Transverse colon (tissue), 4 donors: ENCODE measurements at regions of chr3 and their contacts with region 1.

Region 1: GRCh38 chr3:53881691-53882593 is at the start of gene ACTR8:
- DNase-seq: peak; percentile 88
- H3K4me3 ChIP-seq: peak within 1 kb of the TSS; percentile 74 to 93 (median 82)
- H3K27ac ChIP-seq: peak within 1 kb of the TSS; percentile 89 to 92 (median 90)
- H3K4me1 ChIP-seq: peaks cover 5 to 14% (median 11%) of the 10 kb centered on the region in 4 donors
- H3K27me3 ChIP-seq: no peaks in the 10 kb centered on the region
- CTCF ChIP-seq: peak in 4 of 5 experiments; percentile 16 to 58 (median 30)
- EP300 ChIP-seq: no peak
- POLR2A ChIP-seq: peak; percentile 76
- total RNA-seq, gene ACTR8: 23.2 to 31.8 (median 28.7) TPM

Region 2: GRCh38 chr3:53255775-53256703 is 625.9 kb before region 1 on chr3 and contains the start of gene TKT:
- in situ Hi-C with region 1: no loop called
- intact Hi-C with region 1: loop called (anchors 10 kb)
- DNase-seq: peak; percentile 90
- H3K4me3 ChIP-seq: peak within 1 kb of the TSS; percentile 80 to 97 (median 84)
- H3K27ac ChIP-seq: peak within 1 kb of the TSS; percentile 83 to 99 (median 95)
- H3K4me1 ChIP-seq: peaks cover 15 to 41% (median 29%) of the 10 kb centered on the region in 4 donors
- H3K27me3 ChIP-seq: no peaks in the 10 kb centered on the region
- CTCF ChIP-seq: no peak
- EP300 ChIP-seq: no peak
- POLR2A ChIP-seq: peak; percentile 63
- total RNA-seq, gene TKT: 97.3 to 338 (median 167) TPM

Region 3: DNA sequence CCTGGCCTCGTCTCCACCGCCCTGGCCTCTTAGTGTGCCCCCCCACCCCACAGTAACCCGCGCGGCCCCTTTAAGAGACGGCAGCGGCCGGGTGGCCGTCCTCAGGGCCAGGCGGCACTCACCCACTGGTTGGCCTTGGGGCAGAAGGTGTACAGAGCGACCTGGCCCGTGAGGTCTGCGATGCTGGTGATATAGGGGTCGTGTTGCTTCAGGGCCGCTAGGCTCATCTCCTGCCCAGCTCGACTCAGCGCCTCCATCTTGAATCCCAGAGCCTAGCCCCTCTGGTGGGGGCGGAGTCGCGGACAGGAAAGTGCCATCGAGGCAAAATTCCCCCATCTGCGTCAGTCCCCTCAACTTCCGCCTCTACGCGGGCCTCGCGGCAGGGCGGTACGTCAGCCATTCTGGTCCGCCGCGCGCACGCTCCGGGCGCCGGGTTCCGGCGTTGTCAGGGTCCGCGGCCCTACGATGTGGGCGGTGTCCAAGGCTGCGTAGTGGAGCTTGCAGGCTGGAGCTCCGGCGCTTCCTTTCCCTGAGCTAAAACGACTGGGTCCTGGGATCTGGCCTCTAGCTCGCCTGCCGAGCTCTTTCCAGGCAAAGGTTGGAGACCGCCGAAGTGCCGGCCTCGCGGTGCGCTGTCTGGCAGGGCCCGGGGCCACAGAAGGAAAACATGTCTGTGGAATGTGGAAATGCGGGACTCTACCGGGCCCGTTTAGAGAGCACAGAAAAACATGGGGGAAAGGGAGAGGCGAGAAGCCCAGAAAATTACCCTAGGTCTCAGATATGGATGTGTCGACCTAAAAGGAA is 534.5 kb before region 1 on chr3 and contains the start of gene DCP1A:
- in situ Hi-C with region 1: loop called in 1 of 4 experiments (anchors 25 kb)
- intact Hi-C with region 1: no loop called
- DNase-seq: peak; percentile 97
- H3K4me3 ChIP-seq: peak within 1 kb of the TSS; percentile 76 to 99 (median 90)
- H3K27ac ChIP-seq: peak within 1 kb of the TSS; percentile 93 to 97 (median 95)
- H3K4me1 ChIP-seq: peaks cover 12 to 45% (median 26%) of the 10 kb centered on the region in 4 donors
- H3K27me3 ChIP-seq: no peaks in the 10 kb centered on the region
- CTCF ChIP-seq: no peak
- EP300 ChIP-seq: no peak
- POLR2A ChIP-seq: peak; percentile 92
- total RNA-seq, gene DCP1A: 11.6 to 22.4 (median 17.2) TPM

Region 4: GRCh38 chr3:53900666-53901331 is 18.9 kb after region 1 on chr3:
- in situ Hi-C with region 1: no loop called
- intact Hi-C with region 1: no loop called
- DNase-seq: peak; percentile 49
- H3K4me3 ChIP-seq: no peak overlapping the region
- H3K27ac ChIP-seq: peak overlapping the region in 3 of 4 donors; percentile 56 to 67 (median 63)
- H3K4me1 ChIP-seq: peaks cover 0 to 20% (median 8%) of the 10 kb centered on the region in 4 donors
- H3K27me3 ChIP-seq: peaks cover 23% of the 10 kb centered on the region
- CTCF ChIP-seq: no peak
- EP300 ChIP-seq: no peak
- POLR2A ChIP-seq: no peak